Panc1 (cell line): ENCODE measurements at regions of chr13 and their contacts with region 1.

Region 1: GRCh38 chr13:20461481-20461859 is 64.2 kb downstream of the CRYL1 start:
- DNase-seq: no peak
- ATAC-seq: 0 out of 2 replicates have a peak, but pooled peaks have one; percentile 49
- H3K4me3 ChIP-seq: no peak overlapping the region
- H3K27ac ChIP-seq: peak overlapping the region; percentile 77
- H3K4me1 ChIP-seq: peaks cover 16% of the 10 kb centered on the region
- H3K27me3 ChIP-seq: no peaks in the 10 kb centered on the region
- CTCF ChIP-seq: no peak

Region 2: DNA sequence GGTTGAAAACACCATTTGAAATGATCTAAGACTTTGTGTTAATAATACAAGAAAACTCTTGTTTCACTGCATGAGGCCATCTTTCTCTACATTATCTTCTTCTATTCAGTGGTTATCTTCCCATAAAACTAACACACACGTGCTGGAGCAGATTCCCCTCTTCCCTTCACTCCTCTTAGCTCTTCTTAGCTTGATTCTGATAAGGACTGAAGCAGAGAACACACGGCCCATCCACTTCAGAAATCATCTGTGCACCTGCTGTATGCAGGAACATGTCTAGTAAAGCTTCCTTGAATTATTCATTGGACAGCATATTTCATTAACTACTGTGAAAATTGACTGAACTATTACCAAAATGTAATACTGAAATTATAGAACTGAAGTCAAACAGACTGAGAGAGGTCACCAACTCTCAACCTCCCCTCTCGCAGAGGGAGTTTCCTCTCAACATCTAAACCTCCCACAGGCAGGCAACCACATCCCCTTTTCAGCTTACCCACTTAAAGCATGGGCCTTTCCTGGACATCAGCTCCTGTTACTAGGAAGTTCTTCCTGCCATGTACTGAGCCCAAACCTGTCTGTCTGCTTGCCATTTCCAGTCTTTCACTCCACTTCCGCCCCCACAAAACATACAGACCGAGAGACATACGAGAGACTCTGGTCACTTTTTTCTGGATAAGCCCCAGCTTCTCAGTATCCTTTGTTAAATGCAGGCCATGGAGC is 49.7 kb before region 1 on chr13:
- CTCF ChIA-PET with region 1: no interaction called
- POLR2A ChIA-PET with region 1: no interaction called
- in situ Hi-C with region 1: no loop called
- intact Hi-C with region 1: loop called (anchors 10 kb)
- DNase-seq: no peak
- ATAC-seq: no peak
- H3K4me3 ChIP-seq: no peak overlapping the region
- H3K27ac ChIP-seq: no peak overlapping the region
- H3K4me1 ChIP-seq: no peaks in the 10 kb centered on the region
- H3K27me3 ChIP-seq: no peaks in the 10 kb centered on the region
- CTCF ChIP-seq: no peak